AG04450 (cell line): ENCODE measurements at regions of chr11 and their contacts with region 1.

Region 1: GRCh38 chr11:56841210-56841810 is 92.8 kb upstream of the OR9G4 start:
- DNase-seq: peak; percentile 13
- H3K4me3 ChIP-seq: no peak overlapping the region
- H3K27ac ChIP-seq: no peak overlapping the region
- H3K27me3 ChIP-seq: no peaks in the 10 kb centered on the region
- CTCF ChIP-seq: peak; percentile 67

Region 2: DNA sequence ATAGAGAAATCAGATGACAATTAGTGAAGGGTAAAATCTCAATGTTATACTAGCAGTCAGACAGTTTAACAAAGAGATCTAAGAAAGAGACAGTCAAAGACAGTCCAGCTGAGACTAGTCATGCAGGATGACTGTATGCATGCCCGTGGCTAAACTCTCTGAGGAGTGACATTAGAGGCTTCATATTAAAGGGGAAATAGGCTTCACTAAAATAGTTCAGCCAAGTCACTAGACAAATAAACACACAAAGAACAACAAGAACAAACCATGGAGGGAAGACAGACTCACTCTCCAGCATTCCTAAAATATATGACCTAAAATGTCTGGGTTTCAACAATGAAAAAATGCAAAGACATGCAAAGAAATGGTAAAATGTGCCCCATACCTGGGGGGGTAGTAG is 414.3 kb after region 1 on chr11:
- CTCF ChIA-PET with region 1: interaction called, 236 read pairs
- POLR2A ChIA-PET with region 1: no interaction called
- DNase-seq: no peak
- H3K4me3 ChIP-seq: no peak overlapping the region
- H3K27ac ChIP-seq: no peak overlapping the region
- H3K27me3 ChIP-seq: no peaks in the 10 kb centered on the region
- CTCF ChIP-seq: no peak